AG04450 (cell line): ENCODE measurements at regions of chr4 and their contacts with region 1.

Region 1: GRCh38 chr4:187436251-187436650 is 559.3 kb upstream of the ZFP42 start:
- DNase-seq: no peak
- H3K4me3 ChIP-seq: no peak overlapping the region
- H3K27ac ChIP-seq: no peak overlapping the region
- H3K27me3 ChIP-seq: no peaks in the 10 kb centered on the region
- CTCF ChIP-seq: no peak

Region 2: GRCh38 chr4:187478292-187479140 is 42.3 kb after region 1 on chr4:
- CTCF ChIA-PET with region 1: no interaction called
- POLR2A ChIA-PET with region 1: interaction called, 13 read pairs
- DNase-seq: peak; percentile 82
- H3K4me3 ChIP-seq: peak overlapping the region; percentile 8; the same call in 1 of the 2 replicates
- H3K27ac ChIP-seq: peak overlapping the region; percentile 90
- H3K27me3 ChIP-seq: no peaks in the 10 kb centered on the region
- CTCF ChIP-seq: no peak